Activated CD4-positive, alpha-beta T cell treated with anti-CD3 and anti-CD28 coated beads, Interleukin-2, amount 10 ng/mL, durations not matched to agents 24 days and 14 days (primary cell): ENCODE measurements at regions of chr9 and their contacts with region 1.

Region 1: DNA sequence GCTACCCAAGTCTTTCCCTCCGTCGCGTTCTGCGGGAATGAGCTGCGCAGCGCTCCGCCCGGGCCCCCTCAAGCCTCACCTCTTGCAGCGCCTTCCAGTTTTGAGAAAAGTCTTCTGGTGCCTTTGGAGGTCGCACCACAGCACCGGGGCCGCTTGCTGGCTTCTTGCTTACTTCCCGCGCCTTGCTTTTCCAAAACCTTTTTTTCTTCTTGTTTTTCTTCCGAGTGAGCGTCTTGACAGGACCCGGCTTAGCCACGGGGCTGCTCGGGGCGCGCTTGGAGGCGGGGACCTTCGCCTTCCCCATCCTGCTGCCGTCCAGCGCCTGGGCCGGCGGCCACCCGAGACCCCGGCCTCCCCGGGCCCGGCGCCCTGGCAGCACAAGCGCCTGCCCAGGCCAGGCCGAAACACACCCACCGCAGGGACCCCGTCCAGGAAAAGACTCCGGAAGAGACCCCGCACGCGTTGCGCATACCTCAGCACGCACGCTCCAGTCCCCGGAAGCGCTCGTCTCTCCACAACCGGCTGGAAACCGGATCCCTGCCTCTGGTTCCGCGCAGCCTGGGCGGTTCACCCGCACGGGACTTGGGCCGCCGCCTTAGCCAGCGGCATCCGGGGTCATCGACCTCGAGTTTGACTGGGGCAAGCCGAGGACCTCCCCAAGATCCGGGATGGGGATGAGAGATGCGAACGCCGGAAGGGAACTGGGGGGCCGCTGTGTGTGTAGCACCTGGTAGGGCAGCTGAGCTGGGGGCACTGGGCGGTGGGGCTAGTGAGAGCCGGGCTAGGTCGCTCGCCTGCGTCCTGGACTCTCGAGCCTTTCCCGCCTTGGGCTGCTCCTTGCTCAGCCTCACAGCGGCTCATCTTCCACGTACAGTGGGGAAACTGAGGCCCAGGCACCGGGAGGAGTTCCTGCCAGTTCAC is at the start of gene REXO4:
- DNase-seq: peak; percentile 96
- H3K4me3 Mint-ChIP-seq: peak within 1 kb of the TSS; percentile 88
- H3K27ac Mint-ChIP-seq: peak within 1 kb of the TSS; percentile 94
- H3K4me1 Mint-ChIP-seq: peaks cover 44% of the 10 kb centered on the region
- H3K27me3 Mint-ChIP-seq: no peaks in the 10 kb centered on the region
- total RNA-seq, gene REXO4: 39.9 and 42.3 TPM in 2 replicates

Region 2: GRCh38 chr9:133335878-133336811 is 81.7 kb before region 1 on chr9 and contains the start of gene SURF6:
- intact Hi-C with region 1: loop called (anchors 1 kb)
- DNase-seq: peak; percentile 99
- H3K4me3 Mint-ChIP-seq: peak within 1 kb of the TSS; percentile 89
- H3K27ac Mint-ChIP-seq: peak within 1 kb of the TSS; percentile 90
- H3K4me1 Mint-ChIP-seq: peaks cover 18% of the 10 kb centered on the region
- H3K27me3 Mint-ChIP-seq: no peaks in the 10 kb centered on the region
- total RNA-seq, gene SURF6: 27.4 and 28.8 TPM in 2 replicates

Region 3: DNA sequence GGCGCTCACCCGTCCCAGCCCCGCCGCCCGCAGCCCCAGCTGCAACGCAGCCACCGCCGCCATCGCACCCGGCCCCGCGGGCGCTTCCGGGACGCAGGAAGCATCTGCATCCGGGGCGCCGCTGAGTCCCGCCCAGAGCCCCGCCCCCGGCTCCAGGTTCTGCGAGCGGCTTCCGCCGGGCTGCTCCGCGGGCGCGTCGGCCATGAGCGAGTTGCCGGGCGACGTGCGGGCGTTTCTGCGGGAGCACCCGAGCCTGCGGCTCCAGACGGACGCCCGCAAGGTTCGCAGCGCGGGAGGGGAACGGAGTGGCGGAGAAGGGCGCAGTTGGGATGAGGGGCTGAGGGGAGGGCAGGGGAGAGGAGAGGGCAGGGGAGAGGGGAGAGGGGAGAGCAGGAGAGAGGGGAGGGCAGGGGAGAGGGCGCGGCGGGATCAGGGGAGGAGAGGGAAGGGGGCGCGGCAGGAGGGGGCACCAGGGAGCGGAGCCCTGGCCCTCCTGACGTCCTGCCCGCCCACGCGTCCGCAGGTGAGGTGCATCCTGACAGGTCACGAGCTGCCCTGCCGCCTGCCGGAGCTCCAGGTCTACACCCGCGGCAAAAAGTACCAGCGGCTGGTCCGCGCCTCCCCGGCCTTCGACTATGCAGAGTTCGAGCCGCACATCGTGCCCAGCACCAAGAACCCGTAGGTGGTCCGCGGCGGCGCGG is 61.3 kb before region 1 on chr9 and contains the starts of genes SURF1 and SURF2:
- intact Hi-C with region 1: loop called (anchors 5 kb)
- DNase-seq: peak; percentile 97
- H3K4me3 Mint-ChIP-seq: peak within 1 kb of the TSS; percentile 92
- H3K27ac Mint-ChIP-seq: peak within 1 kb of the TSS; percentile 84
- H3K4me1 Mint-ChIP-seq: peaks cover 42% of the 10 kb centered on the region
- H3K27me3 Mint-ChIP-seq: no peaks in the 10 kb centered on the region
- total RNA-seq, gene SURF1: 29.8 and 33.2 TPM in 2 replicates
- total RNA-seq, gene SURF2: 28.5 and 29.3 TPM in 2 replicates

Region 4: DNA sequence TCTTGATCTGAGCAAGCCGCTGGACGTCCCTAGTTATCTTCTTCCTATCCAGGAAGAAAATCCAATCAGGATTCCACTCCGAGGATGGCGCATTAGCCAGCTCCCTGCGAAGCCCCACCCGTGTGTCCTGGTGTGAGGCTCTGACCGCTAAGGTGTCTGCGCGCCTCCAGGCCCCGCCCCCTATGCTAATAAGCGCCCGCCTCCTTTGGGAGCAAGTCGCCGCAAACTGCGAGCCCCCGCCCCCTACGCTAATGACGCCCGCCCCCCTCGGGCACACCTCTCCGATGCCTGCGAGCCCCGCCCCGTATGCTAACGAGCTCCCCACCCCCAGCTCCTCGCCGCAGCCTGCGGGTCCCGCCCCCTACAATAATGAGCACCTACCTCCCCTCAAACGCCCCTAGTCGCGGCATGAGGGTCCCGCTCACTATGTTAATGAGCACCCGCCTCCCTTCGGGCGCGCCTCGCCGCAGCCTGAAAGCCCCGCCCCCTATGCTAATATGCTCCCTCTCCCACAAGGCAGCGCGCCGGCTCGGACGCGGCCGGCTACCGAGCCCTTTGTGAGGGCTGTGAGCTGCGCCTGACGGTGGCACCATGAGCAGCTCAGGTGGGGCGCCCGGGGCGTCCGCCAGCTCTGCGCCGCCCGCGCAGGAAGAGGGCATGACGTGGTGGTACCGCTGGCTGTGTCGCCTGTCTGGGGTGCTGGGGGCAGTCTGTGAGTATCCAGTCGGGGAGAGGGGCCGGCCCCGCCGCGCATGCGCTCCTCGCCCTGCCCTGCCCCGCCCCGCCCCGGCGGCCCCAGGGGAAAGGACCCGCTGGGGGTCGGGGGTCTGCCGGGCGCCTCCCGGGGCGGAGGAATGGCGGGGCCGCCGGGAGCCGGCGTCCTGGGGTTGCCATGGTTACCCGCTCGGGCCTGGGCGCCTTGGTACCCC is 41.9 kb after region 1 on chr9 and contains the start of gene CACFD1:
- intact Hi-C with region 1: loop called (anchors 5 kb)
- DNase-seq: peak; percentile 96
- H3K4me3 Mint-ChIP-seq: peak within 1 kb of the TSS; percentile 95
- H3K27ac Mint-ChIP-seq: peak within 1 kb of the TSS; percentile 87
- H3K4me1 Mint-ChIP-seq: peaks cover 6% of the 10 kb centered on the region
- H3K27me3 Mint-ChIP-seq: peaks cover 14% of the 10 kb centered on the region
- total RNA-seq, gene CACFD1: 0.40 and 0.70 TPM in 2 replicates

Region 5: DNA sequence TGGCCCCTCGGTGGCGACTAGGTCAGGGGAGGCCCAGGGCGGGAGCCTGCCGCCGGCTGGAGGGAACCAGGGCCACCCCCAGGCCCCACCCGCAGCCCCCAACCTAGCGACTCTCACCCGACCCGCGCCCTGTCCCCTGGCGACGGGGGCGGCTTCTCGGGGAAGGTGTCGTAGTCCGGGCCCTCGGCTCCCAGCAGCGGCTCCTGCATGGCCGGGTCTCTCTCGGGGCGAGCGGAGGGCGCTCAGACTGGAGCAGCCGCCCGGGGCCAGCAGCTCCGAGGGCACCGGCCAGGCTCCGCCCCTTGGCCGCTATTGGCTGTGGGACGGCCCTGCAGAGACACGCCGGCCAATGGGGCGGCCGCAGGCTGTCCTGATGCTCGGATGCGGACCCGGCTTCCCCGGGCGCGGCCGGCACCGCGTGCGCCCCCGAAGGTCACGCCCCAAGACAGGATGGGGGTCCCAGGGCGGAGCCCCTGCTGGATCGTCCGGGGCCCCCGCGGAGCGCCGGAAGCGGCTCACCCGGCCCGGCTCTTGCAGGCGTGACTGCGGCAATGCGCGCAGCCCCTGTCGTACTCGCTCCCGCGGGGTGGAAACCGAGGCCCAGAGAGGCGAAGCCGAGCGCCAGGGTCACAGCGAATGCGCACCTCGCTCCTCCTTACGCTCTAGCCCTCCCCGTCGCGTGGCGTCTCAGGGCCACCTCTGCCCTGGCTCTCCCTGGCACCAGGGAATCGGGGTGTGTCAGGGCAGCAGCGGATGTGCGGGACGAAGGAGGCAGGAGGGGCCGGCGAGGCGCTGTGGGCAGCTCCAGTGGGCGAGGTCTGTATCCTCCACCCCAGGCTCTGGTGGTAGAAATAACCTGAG is 61.3 kb after region 1 on chr9 and contains the start of gene SLC2A6:
- intact Hi-C with region 1: loop called (anchors 5 kb)
- DNase-seq: peak; percentile 96
- H3K4me3 Mint-ChIP-seq: peak within 1 kb of the TSS; percentile 77
- H3K27ac Mint-ChIP-seq: no peak within 1 kb of the TSS
- H3K4me1 Mint-ChIP-seq: peaks cover 3% of the 10 kb centered on the region
- H3K27me3 Mint-ChIP-seq: peaks cover 12% of the 10 kb centered on the region
- total RNA-seq, gene SLC2A6: 3.2 and 4.0 TPM in 2 replicates